ENCODE measurements at regions of chr2 and their contacts with region 1.

Region 1: GRCh38 chr2:191521608-191522208 is 156.2 kb upstream of the NABP1 start:
- DNase-seq: no peak
- H3K4me3 Mint-ChIP-seq: no peak overlapping the region
- H3K27ac Mint-ChIP-seq: no peak overlapping the region
- H3K4me1 Mint-ChIP-seq: no peaks in the 10 kb centered on the region
- H3K27me3 Mint-ChIP-seq: peaks cover 12% of the 10 kb centered on the region

Region 2: GRCh38 chr2:191165176-191165643 is 356.5 kb before region 1 on chr2:
- CTCF ChIA-PET with region 1: interaction called, 26 read pairs
- DNase-seq: peak; percentile 24
- H3K4me3 Mint-ChIP-seq: no peak overlapping the region
- H3K27ac Mint-ChIP-seq: no peak overlapping the region
- H3K4me1 Mint-ChIP-seq: peaks cover 12% of the 10 kb centered on the region
- H3K27me3 Mint-ChIP-seq: peaks cover 10% of the 10 kb centered on the region

Region 3: DNA sequence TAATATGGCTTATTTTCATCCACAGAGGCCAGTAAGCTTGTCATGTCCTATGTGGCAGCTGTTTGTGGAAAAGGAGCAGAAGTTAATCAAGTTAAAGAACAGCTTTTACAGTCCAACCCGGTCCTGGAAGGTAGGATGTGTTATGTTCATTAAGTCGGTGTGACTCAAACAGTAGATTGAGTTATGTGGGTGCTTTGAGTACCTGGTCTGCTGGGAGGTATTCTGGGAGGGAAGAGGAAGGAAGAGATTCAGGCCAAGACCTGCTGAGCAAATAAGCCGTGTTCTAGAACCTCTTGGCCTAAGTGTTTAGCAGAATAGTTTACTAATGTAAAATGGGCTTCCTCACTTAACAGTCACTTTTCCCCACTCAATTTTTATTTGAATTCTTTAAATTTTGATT is 180.3 kb before region 1 on chr2:
- CTCF ChIA-PET with region 1: no interaction called
- DNase-seq: no peak
- H3K4me3 Mint-ChIP-seq: no peak overlapping the region
- H3K27ac Mint-ChIP-seq: no peak overlapping the region
- H3K4me1 Mint-ChIP-seq: no peaks in the 10 kb centered on the region
- H3K27me3 Mint-ChIP-seq: no peaks in the 10 kb centered on the region

Measured in activated naive CD4-positive, alpha-beta T cell treated with anti-CD3 and anti-CD28 coated beads, Interleukin-2, amount 10 ng/mL, durations not matched to agents 7 days and 5 days (primary cell).